ENCODE measurements at regions of chr11 and their contacts with region 1.

Region 1: DNA sequence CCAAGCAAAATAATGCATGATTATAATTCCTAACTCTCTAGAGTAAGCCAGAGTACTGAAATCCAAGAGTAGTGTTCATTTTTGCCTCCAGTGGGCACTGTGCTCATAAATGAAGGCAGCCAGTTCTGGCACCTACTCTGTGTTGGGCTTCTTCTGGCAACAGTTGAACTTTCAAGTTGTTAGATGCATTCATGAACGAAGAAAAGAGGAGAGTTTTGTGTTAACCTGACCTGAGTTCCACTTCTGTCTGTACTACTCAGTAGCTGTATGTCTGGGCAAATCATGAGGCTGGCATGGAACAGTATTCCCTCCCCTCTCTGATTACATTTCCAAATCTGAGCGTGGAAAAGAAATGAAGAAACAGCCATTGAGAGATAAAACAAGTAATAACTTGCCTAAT is 20.3 kb upstream of the TENM4 start:
- DNase-seq: no peak
- H3K4me3 ChIP-seq: no peak overlapping the region
- H3K27ac ChIP-seq: no peak overlapping the region
- H3K4me1 ChIP-seq: no peaks in the 10 kb centered on the region
- H3K27me3 ChIP-seq: no peaks in the 10 kb centered on the region
- CTCF ChIP-seq: peak in 2 of 3 experiments; percentile 71 to 76; a peak in 3 of 4 replicates
- EP300 ChIP-seq: no peak
- POLR2A ChIP-seq: no peak
- RAD21 ChIP-seq: peak; percentile 70 to 87

Region 2: DNA sequence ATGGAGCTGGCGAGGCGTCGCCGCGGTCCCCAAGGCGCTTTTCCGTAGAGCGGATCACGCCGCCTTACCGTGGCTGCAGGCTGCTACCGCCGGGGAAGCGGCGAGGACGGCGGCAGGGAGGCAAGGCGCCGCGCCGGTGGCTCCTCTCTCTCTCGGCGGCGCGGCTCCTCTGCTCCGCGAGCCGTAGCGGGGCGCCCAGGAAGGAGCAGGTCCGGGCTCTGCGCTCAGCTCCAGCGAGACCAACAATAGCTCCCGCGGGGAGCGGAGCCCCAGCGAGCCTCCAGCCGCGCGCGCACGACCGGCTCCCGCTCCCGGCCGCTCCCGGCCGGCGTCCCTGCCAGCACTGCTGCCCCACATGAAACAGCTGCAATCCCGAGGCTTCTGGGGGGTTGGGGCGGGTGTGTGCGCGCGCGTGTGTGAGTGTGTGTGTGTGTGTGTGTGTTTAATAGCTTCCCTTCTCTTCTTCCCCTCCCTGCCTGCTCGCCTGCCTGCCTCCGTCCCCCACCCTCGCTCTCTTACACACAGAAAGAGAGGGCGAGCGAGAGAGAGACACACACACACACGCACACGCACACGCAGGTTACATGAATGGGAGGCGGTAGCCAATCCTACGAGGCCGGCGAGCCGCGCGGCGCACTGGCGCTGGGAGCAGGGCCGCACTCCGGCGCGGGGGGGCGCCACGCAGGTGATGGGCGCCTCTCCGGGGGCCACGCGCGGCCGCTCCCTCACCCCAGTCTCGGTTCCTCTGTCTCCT is 20.5 kb before region 1 on chr11 and contains the start of gene TENM4:
- CTCF ChIA-PET with region 1: interaction called, 18 read pairs
- POLR2A ChIA-PET with region 1: interaction called, 4 read pairs
- DNase-seq: peak in 1 of 2 experiments; percentile 69
- H3K4me3 ChIP-seq: peak within 1 kb of the TSS; percentile 56 to 80 (median 63)
- H3K27ac ChIP-seq: no peak within 1 kb of the TSS
- H3K4me1 ChIP-seq: peaks cover 0 to 15% (median 10%) of the 10 kb centered on the region in 4 experiments; a peak in 6 of 7 replicates
- H3K27me3 ChIP-seq: peaks cover 12 to 64% (median 54%) of the 10 kb centered on the region in 4 experiments
- CTCF ChIP-seq: peak; percentile 46 to 61 (median 56)
- EP300 ChIP-seq: no peak
- POLR2A ChIP-seq: no peak
- RAD21 ChIP-seq: peak in 1 of 2 experiments; percentile 41; a peak in 2 of 4 replicates
- total RNA-seq, gene TENM4: 7.2 and 8.8 TPM in 2 replicates

Region 3: DNA sequence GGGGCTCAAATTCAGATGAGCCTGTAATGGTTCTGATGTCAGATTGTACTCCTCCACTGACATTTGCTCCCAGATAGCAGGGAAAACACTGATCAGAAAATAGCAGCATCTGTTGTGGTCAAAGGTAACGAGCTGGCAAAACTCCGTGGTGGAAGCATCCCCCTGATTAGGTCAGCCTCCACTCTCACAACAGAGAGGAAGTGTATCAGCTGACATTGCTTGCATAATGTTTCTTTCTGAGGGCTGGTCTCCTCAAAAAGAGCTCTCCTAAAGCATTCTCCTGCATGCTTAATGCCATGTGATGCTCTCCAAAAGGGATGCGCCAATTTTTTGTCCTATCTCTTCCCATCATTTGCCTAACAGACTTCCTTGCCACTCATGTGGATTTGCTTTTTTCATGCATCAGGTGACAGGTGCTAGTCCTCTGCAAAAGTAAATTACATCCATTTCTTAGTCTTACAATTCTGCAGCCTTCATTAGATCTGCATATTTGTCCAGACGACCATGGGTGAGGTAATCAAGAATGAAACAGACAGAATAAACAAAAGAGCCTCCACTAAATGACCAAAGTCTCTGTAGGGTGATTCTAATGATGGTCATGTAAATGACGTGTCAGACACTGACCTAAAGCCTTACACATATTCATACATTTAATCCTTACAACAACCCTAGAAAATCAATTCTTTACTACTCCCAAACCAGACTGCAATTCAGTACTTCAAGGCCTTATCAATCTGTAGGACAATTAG is 13.9 kb before region 1 on chr11:
- CTCF ChIA-PET with region 1: interaction called, 18 read pairs
- POLR2A ChIA-PET with region 1: no interaction called
- DNase-seq: no peak
- H3K4me3 ChIP-seq: no peak overlapping the region
- H3K27ac ChIP-seq: no peak overlapping the region
- H3K4me1 ChIP-seq: no peaks in the 10 kb centered on the region; a peak in 1 of 7 replicates
- H3K27me3 ChIP-seq: peaks cover 0 to 7% (median 4%) of the 10 kb centered on the region in 4 experiments; a peak in 4 of 7 replicates
- CTCF ChIP-seq: no peak
- EP300 ChIP-seq: no peak
- POLR2A ChIP-seq: no peak
- RAD21 ChIP-seq: no peak

Region 4: GRCh38 chr11:79471071-79471844 is 10.1 kb after region 1 on chr11:
- CTCF ChIA-PET with region 1: interaction called, 16 read pairs
- POLR2A ChIA-PET with region 1: no interaction called
- DNase-seq: no peak
- H3K4me3 ChIP-seq: no peak overlapping the region
- H3K27ac ChIP-seq: no peak overlapping the region
- H3K4me1 ChIP-seq: peaks cover 16 to 41% (median 33%) of the 10 kb centered on the region in 4 experiments
- H3K27me3 ChIP-seq: peaks cover 0 to 2% (median 0%) of the 10 kb centered on the region in 4 experiments; a peak in 1 of 7 replicates
- CTCF ChIP-seq: no peak
- EP300 ChIP-seq: no peak
- POLR2A ChIP-seq: no peak
- RAD21 ChIP-seq: no peak

Region 5: GRCh38 chr11:79482800-79483199 is 21.7 kb after region 1 on chr11:
- CTCF ChIA-PET with region 1: interaction called, 136 read pairs
- POLR2A ChIA-PET with region 1: no interaction called
- DNase-seq: no peak
- H3K4me3 ChIP-seq: no peak overlapping the region
- H3K27ac ChIP-seq: no peak overlapping the region
- H3K4me1 ChIP-seq: peaks cover 10 to 17% (median 13%) of the 10 kb centered on the region in 4 experiments
- H3K27me3 ChIP-seq: no peaks in the 10 kb centered on the region; a peak in 2 of 7 replicates
- CTCF ChIP-seq: no peak
- EP300 ChIP-seq: no peak
- POLR2A ChIP-seq: no peak
- RAD21 ChIP-seq: no peak

Measured in H1 (cell line).